ENCODE measurements at regions of chr5 and their contacts with region 1.

Region 1: DNA sequence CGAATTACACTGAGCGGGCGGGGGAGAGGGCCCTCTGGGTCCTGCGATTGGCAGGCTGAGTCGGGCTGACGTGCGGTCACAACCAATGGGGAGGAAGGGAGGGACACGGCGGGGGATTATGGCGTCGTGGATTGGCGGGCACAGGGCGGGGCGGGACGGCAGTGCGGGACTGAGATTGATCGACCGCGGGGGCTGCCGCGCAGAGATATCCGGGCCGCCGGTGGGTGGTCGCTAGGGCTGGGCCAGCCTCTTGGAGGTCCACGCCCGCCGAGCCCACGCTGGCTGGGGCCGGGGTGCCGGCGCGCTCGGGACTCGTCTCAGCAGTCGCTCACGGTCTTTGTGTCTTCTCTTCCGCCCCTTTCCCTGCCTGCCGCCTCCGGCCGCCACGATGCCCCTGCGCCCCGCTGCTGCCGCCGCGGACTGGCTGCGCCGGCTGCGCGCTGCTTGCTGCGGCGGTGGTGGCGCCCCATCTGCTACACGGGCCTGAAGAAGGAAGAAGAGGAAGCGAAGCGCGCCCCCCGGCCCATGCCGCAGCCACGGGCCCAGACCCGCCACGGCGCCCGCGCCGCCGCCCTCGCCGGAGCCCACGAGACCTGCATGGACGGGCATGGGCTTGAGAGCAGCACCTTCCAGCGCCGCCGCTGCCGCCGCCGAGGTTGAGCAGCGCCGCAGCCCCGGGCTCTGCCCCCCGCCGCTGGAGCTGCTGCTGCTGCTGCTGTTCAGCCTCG is at the start of gene RGMB:
- DNase-seq: peak; percentile 99
- H3K4me3 ChIP-seq: peak within 1 kb of the TSS; percentile 75 to 92
- H3K27ac ChIP-seq: peak within 1 kb of the TSS; percentile 93 to 94
- H3K4me1 ChIP-seq: peaks cover 8% of the 10 kb centered on the region
- H3K27me3 ChIP-seq: no peaks in the 10 kb centered on the region
- CTCF ChIP-seq: peak in 1 of 4 experiments; percentile 27
- POLR2A ChIP-seq: peak; percentile 98
- total RNA-seq, gene RGMB: 56.5 to 62.2 TPM

Region 2: GRCh38 chr5:96807075-96807654 is 1966.5 kb before region 1 on chr5:
- intact Hi-C with region 1: loop called (anchors 5 kb)
- DNase-seq: peak; percentile 69
- H3K4me3 ChIP-seq: peak overlapping the region; percentile 90 to 99
- H3K27ac ChIP-seq: peak overlapping the region; percentile 99 to 100
- H3K4me1 ChIP-seq: no peaks in the 10 kb centered on the region
- H3K27me3 ChIP-seq: no peaks in the 10 kb centered on the region
- CTCF ChIP-seq: peak in 2 of 4 experiments; percentile 5 to 22
- POLR2A ChIP-seq: no peak

Region 3: GRCh38 chr5:97183100-97183929 is 1590.3 kb before region 1 on chr5 and contains the start of gene RIOK2:
- intact Hi-C with region 1: loop called (anchors 10 kb)
- DNase-seq: peak; percentile 87
- H3K4me3 ChIP-seq: peak within 1 kb of the TSS; percentile 64 to 74
- H3K27ac ChIP-seq: peak within 1 kb of the TSS; percentile 90 to 92
- H3K4me1 ChIP-seq: peaks cover 9% of the 10 kb centered on the region
- H3K27me3 ChIP-seq: no peaks in the 10 kb centered on the region
- CTCF ChIP-seq: peak in 1 of 4 experiments; percentile 18
- POLR2A ChIP-seq: peak; percentile 43
- total RNA-seq, gene RIOK2: 16.2 to 20.5 TPM

Region 4: GRCh38 chr5:97499605-97500004 is 1274.0 kb before region 1 on chr5:
- intact Hi-C with region 1: loop called (anchors 10 kb)
- DNase-seq: no peak
- H3K4me3 ChIP-seq: no peak overlapping the region
- H3K27ac ChIP-seq: no peak overlapping the region
- H3K4me1 ChIP-seq: no peaks in the 10 kb centered on the region
- H3K27me3 ChIP-seq: no peaks in the 10 kb centered on the region
- CTCF ChIP-seq: no peak
- POLR2A ChIP-seq: no peak

Region 5: GRCh38 chr5:98433673-98434072 is 340.0 kb before region 1 on chr5:
- intact Hi-C with region 1: loop called (anchors 5 kb)
- DNase-seq: no peak
- H3K4me3 ChIP-seq: no peak overlapping the region
- H3K27ac ChIP-seq: no peak overlapping the region
- H3K4me1 ChIP-seq: no peaks in the 10 kb centered on the region
- H3K27me3 ChIP-seq: no peaks in the 10 kb centered on the region
- CTCF ChIP-seq: no peak
- POLR2A ChIP-seq: no peak

Region 6: DNA sequence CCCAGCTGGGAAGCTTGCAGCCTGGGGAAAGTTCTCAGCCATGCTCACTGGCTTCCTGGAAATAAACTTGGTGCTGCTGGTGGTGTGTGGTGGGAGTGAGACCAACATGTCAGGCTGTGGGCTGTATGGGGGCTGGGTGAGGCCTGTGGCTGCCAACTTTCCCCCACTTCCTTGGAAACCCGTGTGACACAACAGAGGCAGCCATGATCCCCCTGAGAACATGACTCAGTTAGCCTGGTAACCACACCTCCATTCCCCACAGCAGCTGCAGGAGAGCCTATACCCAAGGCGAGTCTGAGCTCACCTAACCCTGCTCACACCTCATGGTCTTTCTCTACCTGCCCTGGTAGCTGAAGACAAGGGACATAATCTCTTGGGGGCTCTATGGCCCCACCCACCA is 72.9 kb before region 1 on chr5:
- intact Hi-C with region 1: no loop called
- DNase-seq: no peak
- H3K4me3 ChIP-seq: no peak overlapping the region
- H3K27ac ChIP-seq: no peak overlapping the region
- H3K4me1 ChIP-seq: no peaks in the 10 kb centered on the region
- H3K27me3 ChIP-seq: no peaks in the 10 kb centered on the region
- CTCF ChIP-seq: no peak
- POLR2A ChIP-seq: no peak